CD14-positive monocyte (primary cell): ENCODE measurements at regions of chr15 and their contacts with region 1.

Region 1: GRCh38 chr15:26759986-26760385 is 12.9 kb downstream of the GABRB3 start:
- DNase-seq: no peak
- H3K4me3 ChIP-seq: no peak overlapping the region
- H3K4me3 Mint-ChIP-seq: no peak overlapping the region
- H3K27ac ChIP-seq: no peak overlapping the region
- H3K27ac Mint-ChIP-seq: no peak overlapping the region
- H3K4me1 ChIP-seq: no peaks in the 10 kb centered on the region
- H3K4me1 Mint-ChIP-seq: no peaks in the 10 kb centered on the region
- H3K27me3 ChIP-seq: no peaks in the 10 kb centered on the region
- H3K27me3 Mint-ChIP-seq: peaks cover 0 to 1% (median 0%) of the 10 kb centered on the region in 3 donors
- CTCF ChIP-seq: no peak

Region 2: DNA sequence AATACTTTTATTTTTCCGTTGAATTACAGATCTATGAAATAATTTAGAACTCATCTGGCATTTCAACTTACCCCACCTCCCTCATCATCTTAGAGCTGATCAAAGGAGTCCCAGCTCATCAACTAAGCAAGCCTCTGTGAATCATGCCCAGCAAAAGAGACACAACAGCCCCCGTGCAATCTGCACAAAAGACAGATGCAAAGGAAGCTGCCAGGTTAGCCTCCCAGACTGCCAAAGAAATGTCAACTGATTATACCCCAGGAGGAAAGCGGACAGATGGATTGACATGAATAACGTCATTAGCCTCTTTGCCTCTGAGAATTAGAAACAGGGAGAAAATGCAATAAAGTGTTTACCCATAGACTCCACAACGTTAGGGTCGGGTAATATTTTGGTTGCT is 62.1 kb before region 1 on chr15:
- intact Hi-C with region 1: loop called in 1 of 2 experiments (anchors 10 kb)
- DNase-seq: no peak
- H3K4me3 ChIP-seq: no peak overlapping the region
- H3K4me3 Mint-ChIP-seq: no peak overlapping the region
- H3K27ac ChIP-seq: no peak overlapping the region
- H3K27ac Mint-ChIP-seq: no peak overlapping the region
- H3K4me1 ChIP-seq: no peaks in the 10 kb centered on the region
- H3K4me1 Mint-ChIP-seq: no peaks in the 10 kb centered on the region
- H3K27me3 ChIP-seq: no peaks in the 10 kb centered on the region
- H3K27me3 Mint-ChIP-seq: peaks cover 0 to 1% (median 0%) of the 10 kb centered on the region in 3 donors
- CTCF ChIP-seq: no peak